ENCODE measurements at regions of chr6 and their contacts with region 1.

Region 1: GRCh38 chr6:132483779-132484679 is 28.9 kb downstream of the STX7 start:
- DNase-seq: peak; percentile 69
- ATAC-seq: peak; percentile 73
- H3K4me3 Mint-ChIP-seq: no peak overlapping the region
- H3K27ac Mint-ChIP-seq: no peak overlapping the region
- H3K4me1 Mint-ChIP-seq: peaks cover 3% of the 10 kb centered on the region
- H3K27me3 Mint-ChIP-seq: no peaks in the 10 kb centered on the region

Region 2: DNA sequence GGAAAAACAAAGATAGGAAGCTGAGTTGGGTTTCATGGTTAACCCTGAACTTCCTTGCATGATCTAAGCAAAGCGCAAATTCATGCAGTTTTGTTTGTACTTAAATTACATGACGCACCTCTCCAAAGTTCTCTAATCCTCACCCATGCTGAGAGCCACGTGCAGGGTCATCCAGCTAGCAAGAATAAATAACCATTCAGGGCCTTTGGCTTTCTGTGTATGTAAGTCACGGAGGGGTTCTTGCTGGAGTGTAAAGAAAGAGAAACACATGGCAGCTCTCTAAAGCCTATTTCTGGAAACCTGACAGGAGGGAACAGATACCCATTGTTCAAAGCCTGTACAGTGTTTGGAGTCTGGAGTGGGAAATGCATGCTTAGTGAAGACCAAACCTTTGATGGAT is 361.2 kb before region 1 on chr6:
- CTCF ChIA-PET with region 1: no interaction called
- POLR2A ChIA-PET with region 1: no interaction called
- DNase-seq: no peak
- ATAC-seq: no peak
- H3K4me3 Mint-ChIP-seq: no peak overlapping the region
- H3K27ac Mint-ChIP-seq: no peak overlapping the region
- H3K4me1 Mint-ChIP-seq: no peaks in the 10 kb centered on the region
- H3K27me3 Mint-ChIP-seq: peaks cover 2% of the 10 kb centered on the region

Region 3: DNA sequence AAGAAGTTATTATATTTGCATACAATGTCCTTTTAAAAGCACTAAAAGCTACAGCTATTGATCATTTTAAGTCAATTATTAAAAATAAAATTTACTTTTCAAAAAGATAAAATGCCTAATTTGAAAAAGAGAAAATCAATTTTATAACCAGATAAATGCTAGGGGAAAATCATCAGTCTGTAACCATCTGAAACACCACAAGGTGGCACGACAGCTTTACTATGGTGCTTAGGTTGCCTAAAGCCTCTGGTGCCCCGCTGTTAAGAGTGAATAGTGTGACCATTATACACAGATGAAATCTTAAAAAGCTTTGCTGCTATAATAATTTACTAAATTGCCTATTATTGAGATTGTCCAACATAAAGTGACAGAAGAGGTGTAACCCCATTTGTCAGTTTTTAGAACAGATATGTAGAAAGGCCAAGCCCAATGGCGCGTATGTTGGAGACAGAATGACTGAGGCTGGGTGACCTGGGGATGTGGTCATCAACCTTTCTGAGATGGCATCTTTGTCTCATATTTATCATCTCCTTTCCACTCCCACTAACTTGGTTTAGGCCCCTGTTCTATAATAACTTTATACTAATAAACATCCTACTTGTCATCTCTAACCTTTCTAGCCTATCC is 183.6 kb before region 1 on chr6:
- CTCF ChIA-PET with region 1: interaction called, 35 read pairs
- POLR2A ChIA-PET with region 1: no interaction called
- DNase-seq: peak; percentile 28
- ATAC-seq: no peak
- H3K4me3 Mint-ChIP-seq: no peak overlapping the region
- H3K27ac Mint-ChIP-seq: no peak overlapping the region
- H3K4me1 Mint-ChIP-seq: no peaks in the 10 kb centered on the region
- H3K27me3 Mint-ChIP-seq: peaks cover 20% of the 10 kb centered on the region

Region 4: GRCh38 chr6:132495604-132496079 is 11.6 kb after region 1 on chr6:
- CTCF ChIA-PET with region 1: interaction called, 30 read pairs
- POLR2A ChIA-PET with region 1: no interaction called
- DNase-seq: no peak
- ATAC-seq: no peak
- H3K4me3 Mint-ChIP-seq: no peak overlapping the region
- H3K27ac Mint-ChIP-seq: no peak overlapping the region
- H3K4me1 Mint-ChIP-seq: peaks cover 21% of the 10 kb centered on the region
- H3K27me3 Mint-ChIP-seq: no peaks in the 10 kb centered on the region

Region 5: GRCh38 chr6:132512638-132513632 is 28.9 kb after region 1 on chr6 and contains the start of gene STX7:
- CTCF ChIA-PET with region 1: interaction called, 13 read pairs
- POLR2A ChIA-PET with region 1: no interaction called
- DNase-seq: peak; percentile 89
- ATAC-seq: peak; percentile 97
- H3K4me3 Mint-ChIP-seq: peak within 1 kb of the TSS; percentile 94
- H3K27ac Mint-ChIP-seq: peak within 1 kb of the TSS; percentile 89
- H3K4me1 Mint-ChIP-seq: peaks cover 25% of the 10 kb centered on the region
- H3K27me3 Mint-ChIP-seq: peaks cover 15% of the 10 kb centered on the region
- total RNA-seq, gene STX7: 16.0 to 16.4 TPM

Measured in activated CD8-positive, alpha-beta T cell treated with anti-CD3 and anti-CD28 coated beads, Interleukin-2, amount 10 ng/mL, durations not matched to agents 7 days and 5 days (primary cell).